Gastrocnemius medialis (tissue), 4 donors: ENCODE measurements at regions of chr1 and their contacts with region 1.

Region 1: GRCh38 chr1:45803301-45803780 is at the start of gene MAST2:
- DNase-seq: peak; percentile 77 to 87
- ATAC-seq: peak; percentile 65 to 80
- H3K4me3 ChIP-seq: peak within 1 kb of the TSS; percentile 64 to 79 (median 72)
- H3K27ac ChIP-seq: peak within 1 kb of the TSS; percentile 88 to 96 (median 92)
- H3K4me1 ChIP-seq: peaks cover 22 to 40% of the 10 kb centered on the region in 2 donors
- H3K27me3 ChIP-seq: no peaks in the 10 kb centered on the region
- CTCF ChIP-seq: peak in 2 of 5 experiments; percentile 21 to 30
- POLR2A ChIP-seq: peak; percentile 97 to 98
- total RNA-seq, gene MAST2: 110 to 195 (median 162) TPM

Region 2: DNA sequence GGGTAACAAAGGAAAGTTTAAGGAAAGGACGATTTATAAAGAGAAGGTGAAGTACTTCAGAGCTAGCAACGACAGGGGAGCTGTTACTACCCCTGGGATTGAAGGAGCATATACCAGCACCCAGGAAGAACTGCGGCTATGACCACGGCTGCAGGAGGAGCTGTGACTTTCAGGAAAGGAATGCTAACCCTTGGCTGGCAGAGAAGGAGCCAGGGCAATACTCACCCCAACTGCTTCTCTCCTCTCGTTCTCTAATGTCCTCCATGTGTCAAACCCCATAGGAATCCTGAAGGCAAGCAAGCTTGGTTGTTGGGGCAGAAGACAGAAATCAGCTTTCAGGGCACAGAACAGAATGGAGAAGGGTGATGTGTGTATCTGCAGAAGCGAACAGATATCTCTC is 1249.6 kb before region 1 on chr1:
- in situ Hi-C with region 1: no loop called
- intact Hi-C with region 1: no loop called
- DNase-seq: no peak
- ATAC-seq: no peak
- H3K4me3 ChIP-seq: no peak overlapping the region
- H3K27ac ChIP-seq: no peak overlapping the region
- H3K4me1 ChIP-seq: no peaks in the 10 kb centered on the region
- H3K27me3 ChIP-seq: peaks cover 0 to 6% (median 0%) of the 10 kb centered on the region in 3 donors
- CTCF ChIP-seq: no peak
- POLR2A ChIP-seq: no peak

Region 3: DNA sequence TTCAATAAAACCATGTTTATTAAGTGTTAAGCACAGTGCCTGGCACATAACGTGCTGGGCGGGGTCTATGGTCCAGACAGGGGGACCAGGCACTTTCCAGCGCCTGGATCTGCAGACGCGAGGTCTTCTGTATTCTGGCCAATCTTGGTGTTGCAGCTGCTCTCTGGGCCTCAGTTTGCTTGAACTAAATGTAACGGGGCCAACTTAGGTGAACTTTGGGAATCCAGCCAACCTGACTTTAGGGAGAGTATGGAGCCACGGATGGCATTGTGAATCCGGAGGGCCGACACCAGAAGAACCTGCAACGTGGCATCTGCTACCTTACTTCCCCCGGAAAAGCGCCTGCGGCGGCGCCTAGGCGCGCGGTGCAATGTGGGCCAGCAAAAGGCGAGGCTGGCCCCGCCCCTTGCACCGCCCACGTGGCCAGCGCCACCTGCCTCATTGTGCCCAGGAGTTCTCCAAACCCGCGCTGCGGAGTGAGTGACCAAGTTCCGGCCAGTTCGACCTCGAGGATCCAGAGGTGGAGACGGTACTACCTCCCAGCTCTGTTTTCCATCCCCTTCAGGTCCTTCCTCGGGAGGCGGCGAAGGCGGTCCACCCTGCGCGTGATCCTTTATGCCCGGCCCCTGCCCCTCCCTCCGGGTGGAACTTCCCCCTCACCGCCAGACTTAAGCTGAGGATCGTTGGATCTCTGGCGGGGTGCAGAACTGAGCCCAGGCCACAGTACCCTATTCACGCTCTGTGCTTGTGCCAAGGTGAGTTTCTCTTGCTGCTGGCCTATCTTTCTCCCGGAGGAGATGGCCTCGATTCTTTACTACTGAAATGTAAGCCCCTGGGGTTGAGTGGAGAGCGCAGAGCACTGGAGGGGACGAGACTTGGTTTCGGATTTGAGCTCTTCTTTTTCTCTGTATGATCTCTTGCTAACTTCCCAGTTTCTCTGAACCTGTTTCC is 252.7 kb before region 1 on chr1 and contains the start of gene AKR1A1:
- in situ Hi-C with region 1: no loop called
- intact Hi-C with region 1: no loop called
- DNase-seq: peak; percentile 72 to 82
- ATAC-seq: peak; percentile 96
- H3K4me3 ChIP-seq: peak within 1 kb of the TSS; percentile 71 to 90 (median 86)
- H3K27ac ChIP-seq: peak within 1 kb of the TSS; percentile 88 to 94 (median 93)
- H3K4me1 ChIP-seq: peaks cover 9 to 11% of the 10 kb centered on the region in 2 donors
- H3K27me3 ChIP-seq: no peaks in the 10 kb centered on the region
- CTCF ChIP-seq: peak in 3 of 5 experiments; percentile 5 to 25 (median 21)
- POLR2A ChIP-seq: peak; percentile 57 to 64
- total RNA-seq, gene AKR1A1: 15.6 to 40.1 (median 37.1) TPM

Region 4: DNA sequence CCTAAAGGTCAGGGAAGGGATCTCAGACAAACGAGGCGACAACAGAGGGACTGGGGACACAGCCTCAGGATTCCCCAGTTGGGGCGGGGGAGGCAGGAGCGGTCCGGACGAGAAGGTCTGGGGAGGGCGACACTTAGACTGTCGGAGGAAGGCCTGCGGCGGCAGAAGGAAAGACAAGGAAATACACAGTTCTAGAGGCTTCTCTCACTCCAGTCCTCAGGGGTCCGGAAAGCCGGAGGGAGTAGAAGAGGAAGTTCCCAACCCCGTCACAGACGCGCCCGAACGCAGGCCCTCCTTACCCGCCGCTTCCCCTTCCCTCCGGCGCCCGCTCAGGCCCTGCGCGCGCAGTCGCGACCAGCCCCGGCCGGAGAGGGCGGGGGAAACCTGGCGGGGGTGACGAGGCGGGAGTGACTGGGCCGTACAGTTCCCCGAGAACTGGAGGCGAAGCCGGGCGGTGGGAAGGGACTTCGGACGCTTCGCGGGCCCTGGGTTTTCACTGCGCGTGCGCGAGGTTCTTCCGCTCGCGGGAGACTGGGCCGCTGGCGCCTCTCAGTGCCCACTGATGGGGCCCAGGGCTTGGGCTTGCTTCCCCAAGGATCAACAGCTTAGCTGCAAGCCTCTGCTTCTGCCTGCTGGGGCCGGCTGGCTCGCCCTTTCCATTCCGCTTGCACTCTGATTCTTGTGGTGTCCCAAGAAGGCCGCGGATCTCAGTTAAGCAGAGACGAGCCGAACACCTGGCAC is 52.9 kb before region 1 on chr1 and contains the start of gene IPP:
- in situ Hi-C with region 1: no loop called
- intact Hi-C with region 1: loop called (anchors 1 kb)
- DNase-seq: peak; percentile 95 to 97
- ATAC-seq: peak; percentile 91 to 93
- H3K4me3 ChIP-seq: peak within 1 kb of the TSS; percentile 65 to 92 (median 72)
- H3K27ac ChIP-seq: peak within 1 kb of the TSS; percentile 93 to 100 (median 94)
- H3K4me1 ChIP-seq: peaks cover 11% of the 10 kb centered on the region in 2 donors
- H3K27me3 ChIP-seq: no peaks in the 10 kb centered on the region
- CTCF ChIP-seq: peak in 2 of 5 experiments; percentile 17 to 29
- POLR2A ChIP-seq: peak; percentile 93 to 95
- total RNA-seq, gene IPP: 5.6 to 11.7 (median 7.1) TPM

Region 5: GRCh38 chr1:45785583-45785982 is 17.8 kb before region 1 on chr1:
- in situ Hi-C with region 1: no loop called
- intact Hi-C with region 1: no loop called
- DNase-seq: no peak
- ATAC-seq: no peak
- H3K4me3 ChIP-seq: no peak overlapping the region
- H3K27ac ChIP-seq: no peak overlapping the region
- H3K4me1 ChIP-seq: no peaks in the 10 kb centered on the region
- H3K27me3 ChIP-seq: no peaks in the 10 kb centered on the region
- CTCF ChIP-seq: no peak
- POLR2A ChIP-seq: no peak